GM12878 (cell line): ENCODE measurements at regions of chr9 and their contacts with region 1.

Region 1: DNA sequence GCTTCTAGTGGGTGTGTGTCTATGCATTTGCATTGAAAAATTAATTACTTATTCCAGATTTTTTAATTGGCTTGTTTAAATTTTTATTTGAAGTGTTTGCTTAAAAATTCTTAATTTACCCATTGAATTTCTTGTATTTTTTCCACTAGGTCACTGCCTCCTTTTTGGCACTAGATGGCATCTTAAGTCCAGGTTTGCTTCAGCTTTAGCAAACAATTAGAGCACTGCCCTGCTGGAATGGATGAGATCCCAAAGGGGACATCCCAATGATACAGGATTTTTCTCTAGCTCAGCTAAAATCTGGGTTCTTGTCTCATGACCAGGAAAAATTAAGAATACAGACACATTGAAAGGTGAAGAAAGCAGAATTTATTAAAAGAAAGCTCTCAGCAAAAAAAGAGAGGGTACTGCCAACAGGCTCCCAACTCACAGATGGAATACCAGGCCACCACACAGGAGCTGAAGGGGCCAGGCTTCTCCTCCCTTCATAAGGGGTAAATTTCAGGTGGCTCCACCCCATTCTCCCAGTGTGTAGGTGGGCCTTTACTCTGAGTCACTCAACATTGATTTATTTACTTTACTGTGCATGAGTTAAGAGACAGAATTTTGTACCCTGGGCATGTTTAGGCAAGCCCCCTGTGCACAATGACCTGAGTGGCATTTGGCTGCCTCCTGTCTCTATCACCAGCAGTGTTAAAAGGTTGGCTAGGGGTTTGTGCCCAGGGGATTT is 532.4 kb downstream of the ANXA1 start:
- DNase-seq: no peak
- ATAC-seq: peak; percentile 87
- H3K4me3 ChIP-seq: no peak overlapping the region
- H3K27ac ChIP-seq: no peak overlapping the region
- H3K4me1 ChIP-seq: no peaks in the 10 kb centered on the region
- H3K27me3 ChIP-seq: no peaks in the 10 kb centered on the region
- CTCF ChIP-seq: peak; percentile 47 to 67 (median 53); a peak in 5 of 6 replicates
- EP300 ChIP-seq: no peak
- POLR2A ChIP-seq: no peak
- RAD21 ChIP-seq: peak; percentile 88

Region 2: GRCh38 chr9:74281674-74282073 is 597.6 kb after region 1 on chr9:
- CTCF ChIA-PET with region 1: interaction called, 6 read pairs
- POLR2A ChIA-PET with region 1: no interaction called
- RAD21 ChIA-PET with region 1: no interaction called
- SMC1A ChIA-PET with region 1: no interaction called
- in situ Hi-C with region 1: no loop called
- intact Hi-C with region 1: loop called (anchors 2 kb)
- DNase-seq: no peak
- ATAC-seq: peak; percentile 72
- H3K4me3 ChIP-seq: no peak overlapping the region
- H3K27ac ChIP-seq: no peak overlapping the region
- H3K4me1 ChIP-seq: peaks cover 4% of the 10 kb centered on the region; the same call in 1 of the 2 replicates
- H3K27me3 ChIP-seq: no peaks in the 10 kb centered on the region
- CTCF ChIP-seq: peak in 2 of 3 experiments; percentile 38 to 39; a peak in 3 of 6 replicates
- EP300 ChIP-seq: no peak
- POLR2A ChIP-seq: no peak
- RAD21 ChIP-seq: peak; percentile 40

Region 3: GRCh38 chr9:74379718-74380117 is 695.7 kb after region 1 on chr9:
- CTCF ChIA-PET with region 1: interaction called, 9 read pairs
- POLR2A ChIA-PET with region 1: no interaction called
- RAD21 ChIA-PET with region 1: interaction called, 5 read pairs
- SMC1A ChIA-PET with region 1: interaction called, 14 read pairs
- in situ Hi-C with region 1: loop called (anchors 10 kb)
- intact Hi-C with region 1: loop called (anchors 1 kb)
- DNase-seq: no peak
- ATAC-seq: peak; percentile 93
- H3K4me3 ChIP-seq: no peak overlapping the region
- H3K27ac ChIP-seq: no peak overlapping the region
- H3K4me1 ChIP-seq: no peaks in the 10 kb centered on the region
- H3K27me3 ChIP-seq: no peaks in the 10 kb centered on the region; a peak in 1 of 4 replicates
- CTCF ChIP-seq: peak; percentile 36 to 62 (median 44); a peak in 5 of 6 replicates
- EP300 ChIP-seq: no peak
- POLR2A ChIP-seq: no peak
- RAD21 ChIP-seq: peak; percentile 57

Region 4: GRCh38 chr9:74570879-74571512 is 887.0 kb after region 1 on chr9:
- CTCF ChIA-PET with region 1: interaction called, 15 read pairs
- POLR2A ChIA-PET with region 1: no interaction called
- RAD21 ChIA-PET with region 1: no interaction called
- SMC1A ChIA-PET with region 1: interaction called, 3 read pairs
- in situ Hi-C with region 1: loop called (anchors 10 kb)
- intact Hi-C with region 1: loop called (anchors 1 kb)
- DNase-seq: no peak
- ATAC-seq: peak; percentile 48; the same call in 2 of the 3 replicates
- H3K4me3 ChIP-seq: no peak overlapping the region
- H3K27ac ChIP-seq: no peak overlapping the region
- H3K4me1 ChIP-seq: peaks cover 3% of the 10 kb centered on the region; the same call in 1 of the 2 replicates
- H3K27me3 ChIP-seq: no peaks in the 10 kb centered on the region
- CTCF ChIP-seq: peak; percentile 60 to 79 (median 71)
- EP300 ChIP-seq: no peak
- POLR2A ChIP-seq: no peak
- RAD21 ChIP-seq: peak; percentile 72

Region 5: DNA sequence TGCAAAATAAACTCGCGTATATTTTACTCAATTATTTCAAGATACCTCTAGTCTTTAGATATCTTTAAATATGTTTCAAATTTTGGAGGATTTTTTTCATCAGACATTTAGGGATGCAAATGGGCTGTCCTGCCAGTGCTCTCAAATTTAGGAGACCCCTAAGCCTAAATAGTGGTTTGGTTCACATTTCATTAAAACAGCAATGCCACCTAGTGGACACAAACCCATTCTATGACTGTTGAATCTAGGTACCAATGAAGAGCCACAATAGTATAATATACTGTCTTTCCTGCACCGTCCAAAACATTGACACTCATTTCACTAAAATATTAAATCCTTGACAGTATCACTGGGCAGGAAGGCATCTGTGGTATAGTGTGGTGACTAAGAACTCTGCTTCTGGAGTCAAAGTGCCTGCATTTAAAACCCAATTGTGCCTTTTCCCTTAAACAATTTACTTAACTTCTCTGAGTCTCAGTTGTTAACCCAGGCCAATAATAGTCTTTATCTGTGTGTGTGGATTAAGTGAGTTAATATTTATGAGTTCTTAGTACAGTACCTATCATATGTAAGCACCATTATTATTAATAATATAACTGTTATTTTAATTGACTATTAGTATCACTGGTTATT is 961.1 kb after region 1 on chr9:
- CTCF ChIA-PET with region 1: interaction called, 4 read pairs
- POLR2A ChIA-PET with region 1: no interaction called
- RAD21 ChIA-PET with region 1: no interaction called
- SMC1A ChIA-PET with region 1: no interaction called
- in situ Hi-C with region 1: no loop called
- intact Hi-C with region 1: loop called (anchors 1 kb)
- DNase-seq: no peak
- ATAC-seq: peak; percentile 78
- H3K4me3 ChIP-seq: no peak overlapping the region
- H3K27ac ChIP-seq: no peak overlapping the region
- H3K4me1 ChIP-seq: no peaks in the 10 kb centered on the region
- H3K27me3 ChIP-seq: no peaks in the 10 kb centered on the region; a peak in 2 of 4 replicates
- CTCF ChIP-seq: peak; percentile 50 to 56 (median 51); a peak in 5 of 6 replicates
- EP300 ChIP-seq: no peak
- POLR2A ChIP-seq: no peak
- RAD21 ChIP-seq: peak; percentile 50

Region 6: GRCh38 chr9:74742792-74743730 is 1059.0 kb after region 1 on chr9:
- CTCF ChIA-PET with region 1: interaction called, 7 read pairs
- POLR2A ChIA-PET with region 1: no interaction called
- RAD21 ChIA-PET with region 1: no interaction called
- SMC1A ChIA-PET with region 1: no interaction called
- in situ Hi-C with region 1: loop called (anchors 25 kb)
- intact Hi-C with region 1: loop called (anchors 2 kb)
- DNase-seq: no peak
- ATAC-seq: peak; percentile 59
- H3K4me3 ChIP-seq: no peak overlapping the region
- H3K27ac ChIP-seq: no peak overlapping the region
- H3K4me1 ChIP-seq: no peaks in the 10 kb centered on the region
- H3K27me3 ChIP-seq: peaks cover 0 to 7% of the 10 kb centered on the region in 2 experiments; a peak in 2 of 4 replicates
- CTCF ChIP-seq: peak; percentile 56 to 66 (median 62)
- EP300 ChIP-seq: no peak
- POLR2A ChIP-seq: no peak
- RAD21 ChIP-seq: peak; percentile 54